ENCODE measurements at regions of chr2 and their contacts with region 1.

Region 1: GRCh38 chr2:11124503-11125068 is 30.7 kb upstream of the SLC66A3 start:
- DNase-seq: peak; percentile 78
- ATAC-seq: peak; percentile 68

Region 2: GRCh38 chr2:10835052-10835970 is 289.3 kb before region 1 on chr2:
- intact Hi-C with region 1: loop called (anchors 5 kb)
- DNase-seq: peak; percentile 88
- ATAC-seq: peak; percentile 84

Measured in left ventricle myocardium superior (tissue), 1 donor.